H1 (cell line): ENCODE measurements at regions of chr3 and their contacts with region 1.

Region 1: GRCh38 chr3:63349583-63350521 is 71.7 kb downstream of the SYNPR start:
- DNase-seq: no peak
- H3K4me3 ChIP-seq: no peak overlapping the region
- H3K27ac ChIP-seq: no peak overlapping the region
- H3K4me1 ChIP-seq: peaks cover 0 to 4% (median 3%) of the 10 kb centered on the region in 4 experiments; a peak in 3 of 7 replicates
- H3K27me3 ChIP-seq: no peaks in the 10 kb centered on the region
- CTCF ChIP-seq: peak in 2 of 3 experiments; percentile 70 to 71; a peak in 3 of 4 replicates
- EP300 ChIP-seq: no peak
- POLR2A ChIP-seq: no peak
- RAD21 ChIP-seq: peak; percentile 83 to 86

Region 2: DNA sequence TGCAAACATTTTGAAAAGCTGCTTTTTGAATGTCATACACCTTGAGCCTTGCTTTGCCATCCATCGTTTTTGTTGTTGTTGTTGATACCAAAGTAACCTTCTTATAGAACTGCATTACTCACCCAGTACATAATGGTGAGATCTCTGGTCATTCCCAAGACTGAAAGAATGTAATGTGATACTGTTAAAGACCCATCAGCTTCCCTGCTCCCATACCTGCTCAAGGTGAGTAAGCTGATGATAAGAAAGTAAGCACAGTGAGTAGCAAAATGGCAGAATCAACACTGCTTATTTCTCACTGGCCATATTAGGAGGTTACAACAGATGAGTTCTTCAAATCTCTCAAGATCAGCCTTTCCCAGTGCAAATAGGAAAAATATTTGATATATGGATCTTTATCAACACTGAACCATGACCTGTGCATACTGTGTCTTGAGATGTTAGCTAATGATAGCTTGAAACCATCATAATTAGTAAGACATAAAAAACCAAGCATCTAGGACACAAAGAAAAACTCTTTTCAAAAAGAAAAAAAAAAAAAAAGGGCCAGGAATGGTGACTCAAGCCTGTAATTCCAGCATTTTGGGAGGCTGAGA is 564.4 kb before region 1 on chr3:
- CTCF ChIA-PET with region 1: no interaction called
- POLR2A ChIA-PET with region 1: no interaction called
- DNase-seq: no peak
- H3K4me3 ChIP-seq: no peak overlapping the region
- H3K27ac ChIP-seq: no peak overlapping the region
- H3K4me1 ChIP-seq: peaks cover 0 to 5% (median 2%) of the 10 kb centered on the region in 4 experiments; a peak in 3 of 7 replicates
- H3K27me3 ChIP-seq: no peaks in the 10 kb centered on the region
- CTCF ChIP-seq: no peak
- EP300 ChIP-seq: no peak
- POLR2A ChIP-seq: no peak
- RAD21 ChIP-seq: no peak

Region 3: DNA sequence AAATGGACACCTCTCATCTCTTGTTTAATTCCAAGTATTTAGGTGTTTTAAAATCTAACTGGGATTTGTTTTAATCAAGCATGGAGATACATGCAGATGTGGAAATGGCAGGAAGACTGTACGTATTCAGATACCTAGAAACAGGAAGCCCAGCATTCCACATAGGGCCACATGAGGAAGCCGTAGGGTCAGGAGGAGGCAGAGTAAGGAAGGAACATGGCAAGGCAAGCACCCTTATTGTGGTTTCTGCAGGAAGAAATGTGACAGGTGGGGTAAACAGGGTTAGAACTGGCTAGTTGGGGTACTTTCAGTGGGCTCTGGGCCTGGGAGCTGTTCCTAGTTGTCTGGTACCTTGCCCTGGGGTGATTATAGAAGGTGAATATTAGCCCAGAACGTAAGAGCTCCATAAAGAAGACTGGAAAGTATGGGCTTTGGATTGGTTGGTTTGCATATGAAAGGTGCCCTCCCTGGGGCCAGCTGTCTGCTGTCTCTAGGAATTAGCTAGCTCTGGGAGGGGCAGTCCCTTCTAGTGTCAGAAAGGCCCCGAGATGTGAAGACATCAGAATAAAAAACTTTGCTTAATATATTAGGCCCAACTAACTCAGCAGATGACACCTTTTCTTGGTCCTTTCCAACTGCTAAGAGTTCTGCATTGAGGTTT is 366.9 kb before region 1 on chr3:
- CTCF ChIA-PET with region 1: no interaction called
- POLR2A ChIA-PET with region 1: no interaction called
- DNase-seq: no peak
- H3K4me3 ChIP-seq: no peak overlapping the region
- H3K27ac ChIP-seq: no peak overlapping the region; the same call in 1 of the 2 replicates
- H3K4me1 ChIP-seq: peaks cover 0 to 15% (median 3%) of the 10 kb centered on the region in 4 experiments; a peak in 3 of 7 replicates
- H3K27me3 ChIP-seq: no peaks in the 10 kb centered on the region
- CTCF ChIP-seq: no peak
- EP300 ChIP-seq: no peak
- POLR2A ChIP-seq: no peak
- RAD21 ChIP-seq: no peak; a peak in 1 of 4 replicates

Region 4: GRCh38 chr3:63221254-63221653 is 128.6 kb before region 1 on chr3:
- CTCF ChIA-PET with region 1: no interaction called
- POLR2A ChIA-PET with region 1: no interaction called
- DNase-seq: no peak
- H3K4me3 ChIP-seq: no peak overlapping the region
- H3K27ac ChIP-seq: no peak overlapping the region
- H3K4me1 ChIP-seq: peaks cover 0 to 4% (median 0%) of the 10 kb centered on the region in 4 experiments; a peak in 1 of 7 replicates
- H3K27me3 ChIP-seq: no peaks in the 10 kb centered on the region
- CTCF ChIP-seq: no peak
- EP300 ChIP-seq: no peak
- POLR2A ChIP-seq: no peak
- RAD21 ChIP-seq: no peak

Region 5: DNA sequence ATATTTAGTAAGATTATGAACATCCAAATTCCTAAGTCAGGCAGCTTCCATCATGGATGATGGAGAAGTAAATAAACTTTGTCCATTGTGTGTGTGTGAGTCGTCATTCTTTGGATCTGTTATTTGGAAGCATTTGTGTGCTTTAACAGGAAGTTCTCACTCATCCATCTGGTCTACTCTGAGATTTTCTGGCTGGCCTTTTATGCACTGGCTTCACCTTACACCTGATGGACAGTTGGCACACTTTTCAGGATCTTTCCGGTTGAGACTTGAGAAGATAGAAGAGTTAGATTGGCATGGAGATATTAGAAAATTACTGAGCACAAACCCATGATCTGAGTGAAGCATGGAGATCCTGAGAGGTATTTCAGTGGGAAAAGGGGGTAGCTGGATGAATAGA is 59.2 kb before region 1 on chr3:
- CTCF ChIA-PET with region 1: no interaction called
- POLR2A ChIA-PET with region 1: no interaction called
- DNase-seq: no peak
- H3K4me3 ChIP-seq: no peak overlapping the region
- H3K27ac ChIP-seq: no peak overlapping the region
- H3K4me1 ChIP-seq: peaks cover 0 to 3% (median 0%) of the 10 kb centered on the region in 4 experiments; a peak in 2 of 7 replicates
- H3K27me3 ChIP-seq: no peaks in the 10 kb centered on the region; a peak in 1 of 7 replicates
- CTCF ChIP-seq: no peak
- EP300 ChIP-seq: no peak
- POLR2A ChIP-seq: no peak
- RAD21 ChIP-seq: no peak

Region 6: DNA sequence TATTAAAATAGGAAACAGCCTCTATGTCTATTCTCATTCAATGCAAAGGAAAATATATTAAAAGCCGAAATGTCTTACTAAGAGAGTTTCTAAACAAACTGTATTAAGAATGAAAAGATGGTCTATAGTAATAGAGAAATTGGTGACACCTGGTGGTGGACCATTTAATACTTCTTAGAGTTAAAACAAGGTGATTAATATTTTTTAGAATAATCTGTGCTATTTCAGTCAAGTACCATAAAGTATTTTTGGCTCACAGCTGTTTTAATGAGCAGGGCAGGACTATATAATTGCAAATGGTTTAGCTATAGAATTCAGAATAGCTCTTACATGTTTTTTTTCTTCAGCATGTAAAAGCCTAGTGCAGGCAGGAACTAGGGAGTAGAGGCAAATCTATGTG is 16.0 kb before region 1 on chr3:
- CTCF ChIA-PET with region 1: interaction called, 37 read pairs
- POLR2A ChIA-PET with region 1: interaction called, 3 read pairs
- DNase-seq: no peak
- H3K4me3 ChIP-seq: no peak overlapping the region
- H3K27ac ChIP-seq: no peak overlapping the region
- H3K4me1 ChIP-seq: no peaks in the 10 kb centered on the region
- H3K27me3 ChIP-seq: peaks cover 0 to 1% (median 0%) of the 10 kb centered on the region in 4 experiments; a peak in 2 of 7 replicates
- CTCF ChIP-seq: no peak
- EP300 ChIP-seq: no peak
- POLR2A ChIP-seq: no peak
- RAD21 ChIP-seq: no peak; a peak in 1 of 4 replicates

Region 7: DNA sequence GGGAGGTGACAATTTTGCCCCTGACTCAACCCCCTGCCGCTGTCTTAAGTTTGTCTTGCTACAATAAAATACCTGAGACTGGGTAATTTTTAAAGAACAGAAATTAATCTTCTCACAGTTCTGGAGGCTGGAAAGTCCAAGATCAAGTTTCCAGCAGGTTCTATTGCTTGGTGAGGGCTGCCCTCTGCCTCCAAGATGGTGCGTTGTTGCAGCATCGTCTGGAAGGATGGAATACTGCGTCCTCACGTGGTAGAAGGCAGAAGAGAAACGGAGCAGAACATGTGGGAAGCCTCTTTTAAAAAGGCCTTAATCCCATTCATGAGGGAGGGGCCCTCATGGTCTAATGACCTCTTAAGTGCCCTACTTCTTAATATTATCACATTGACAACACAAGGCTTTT is 215.4 kb after region 1 on chr3:
- CTCF ChIA-PET with region 1: interaction called, 34 read pairs
- POLR2A ChIA-PET with region 1: no interaction called
- DNase-seq: no peak
- H3K4me3 ChIP-seq: no peak overlapping the region
- H3K27ac ChIP-seq: no peak overlapping the region
- H3K4me1 ChIP-seq: peaks cover 0 to 4% (median 0%) of the 10 kb centered on the region in 4 experiments; a peak in 1 of 7 replicates
- H3K27me3 ChIP-seq: no peaks in the 10 kb centered on the region; a peak in 1 of 7 replicates
- CTCF ChIP-seq: peak; percentile 38 to 54 (median 46)
- EP300 ChIP-seq: no peak
- POLR2A ChIP-seq: no peak
- RAD21 ChIP-seq: peak; percentile 73 to 84

Region 8: GRCh38 chr3:63583043-63583442 is 233.2 kb after region 1 on chr3:
- CTCF ChIA-PET with region 1: interaction called, 13 read pairs
- POLR2A ChIA-PET with region 1: no interaction called
- DNase-seq: no peak
- H3K4me3 ChIP-seq: no peak overlapping the region
- H3K27ac ChIP-seq: no peak overlapping the region
- H3K4me1 ChIP-seq: peaks cover 0 to 5% (median 3%) of the 10 kb centered on the region in 4 experiments; a peak in 2 of 7 replicates
- H3K27me3 ChIP-seq: peaks cover 0 to 2% (median 0%) of the 10 kb centered on the region in 4 experiments; a peak in 1 of 7 replicates
- CTCF ChIP-seq: no peak
- EP300 ChIP-seq: no peak
- POLR2A ChIP-seq: no peak
- RAD21 ChIP-seq: no peak

Region 9: DNA sequence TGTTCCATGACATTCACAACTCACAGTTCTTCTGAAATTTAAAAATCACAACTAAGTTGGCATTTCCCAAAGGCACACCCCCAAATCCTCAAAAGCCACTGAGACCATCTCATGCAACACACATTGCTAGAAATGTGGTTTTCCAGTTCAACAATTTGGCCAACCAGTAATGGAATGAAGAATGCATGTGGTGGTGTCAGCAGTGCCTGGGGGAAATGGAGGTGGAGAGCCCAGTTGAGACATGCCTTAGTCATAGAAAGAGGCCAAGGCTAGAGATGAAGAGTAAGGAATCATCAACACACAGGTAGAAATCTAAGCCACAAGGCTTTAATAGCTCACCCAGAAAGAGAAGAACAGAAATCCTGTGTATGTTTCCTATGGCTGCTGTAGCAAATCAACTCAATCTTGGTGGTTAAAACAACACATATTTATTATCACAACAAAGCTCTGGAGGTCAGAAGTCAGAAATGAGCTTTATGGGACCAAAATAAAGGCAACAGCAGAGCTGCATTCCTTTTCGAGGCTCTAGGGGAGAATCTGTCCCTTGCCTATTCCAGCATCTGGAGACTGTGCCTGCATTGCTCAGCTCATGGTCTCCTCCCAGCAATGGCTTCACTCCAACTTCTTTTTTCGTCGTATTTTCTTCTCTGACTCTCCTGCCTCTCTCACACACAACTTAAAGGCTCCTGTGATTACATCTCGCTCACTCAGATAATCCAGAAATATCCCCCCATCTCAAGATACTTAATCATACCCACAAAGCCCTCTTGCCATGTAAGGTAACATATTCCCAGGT is 356.7 kb after region 1 on chr3:
- CTCF ChIA-PET with region 1: interaction called, 13 read pairs
- POLR2A ChIA-PET with region 1: no interaction called
- DNase-seq: no peak
- H3K4me3 ChIP-seq: no peak overlapping the region
- H3K27ac ChIP-seq: no peak overlapping the region
- H3K4me1 ChIP-seq: no peaks in the 10 kb centered on the region
- H3K27me3 ChIP-seq: no peaks in the 10 kb centered on the region
- CTCF ChIP-seq: no peak
- EP300 ChIP-seq: no peak
- POLR2A ChIP-seq: no peak
- RAD21 ChIP-seq: no peak

Region 10: GRCh38 chr3:63818281-63819150 is 468.7 kb after region 1 on chr3:
- CTCF ChIA-PET with region 1: interaction called, 79 read pairs
- POLR2A ChIA-PET with region 1: no interaction called
- DNase-seq: peak; percentile 23 to 83
- H3K4me3 ChIP-seq: no peak overlapping the region
- H3K27ac ChIP-seq: no peak overlapping the region
- H3K4me1 ChIP-seq: peaks cover 0 to 8% (median 3%) of the 10 kb centered on the region in 4 experiments; a peak in 2 of 7 replicates
- H3K27me3 ChIP-seq: no peaks in the 10 kb centered on the region
- CTCF ChIP-seq: peak; percentile 51 to 85 (median 72)
- EP300 ChIP-seq: no peak
- POLR2A ChIP-seq: no peak
- RAD21 ChIP-seq: peak; percentile 95